K562 (cell line): ENCODE measurements at regions of chr18 and their contacts with region 1.

Region 1: DNA sequence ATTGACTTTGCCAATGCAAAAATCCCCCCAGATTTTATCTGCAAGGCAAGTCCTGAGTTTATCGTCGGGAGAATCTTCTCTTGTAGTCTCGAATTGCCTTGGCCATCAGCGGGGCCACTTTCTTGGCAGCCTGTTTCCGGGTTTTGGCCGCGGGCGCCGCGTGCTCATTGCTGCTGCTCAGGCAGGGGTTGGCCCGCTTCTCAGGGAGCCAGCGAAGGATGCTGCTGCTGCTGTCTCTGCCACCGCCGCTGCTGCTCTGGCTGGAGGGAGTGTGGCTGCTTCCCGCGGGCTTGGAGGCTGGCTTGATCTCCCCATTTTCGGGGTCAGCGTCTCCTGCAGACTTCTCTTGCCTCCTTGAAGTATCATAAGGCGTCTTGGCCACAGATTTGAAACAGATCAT is 2.5 kb downstream of the ELOA2 start:
- DNase-seq: no peak
- ATAC-seq: no peak
- H3K4me3 ChIP-seq: no peak overlapping the region
- H3K27ac ChIP-seq: no peak overlapping the region
- H3K4me1 ChIP-seq: peaks cover 0 to 7% of the 10 kb centered on the region in 2 experiments; a peak in 2 of 5 replicates
- H3K27me3 ChIP-seq: peaks cover 21 to 37% of the 10 kb centered on the region in 2 experiments
- CTCF ChIP-seq: no peak
- EP300 ChIP-seq: no peak
- POLR2A ChIP-seq: no peak
- RAD21 ChIP-seq: no peak

Region 2: DNA sequence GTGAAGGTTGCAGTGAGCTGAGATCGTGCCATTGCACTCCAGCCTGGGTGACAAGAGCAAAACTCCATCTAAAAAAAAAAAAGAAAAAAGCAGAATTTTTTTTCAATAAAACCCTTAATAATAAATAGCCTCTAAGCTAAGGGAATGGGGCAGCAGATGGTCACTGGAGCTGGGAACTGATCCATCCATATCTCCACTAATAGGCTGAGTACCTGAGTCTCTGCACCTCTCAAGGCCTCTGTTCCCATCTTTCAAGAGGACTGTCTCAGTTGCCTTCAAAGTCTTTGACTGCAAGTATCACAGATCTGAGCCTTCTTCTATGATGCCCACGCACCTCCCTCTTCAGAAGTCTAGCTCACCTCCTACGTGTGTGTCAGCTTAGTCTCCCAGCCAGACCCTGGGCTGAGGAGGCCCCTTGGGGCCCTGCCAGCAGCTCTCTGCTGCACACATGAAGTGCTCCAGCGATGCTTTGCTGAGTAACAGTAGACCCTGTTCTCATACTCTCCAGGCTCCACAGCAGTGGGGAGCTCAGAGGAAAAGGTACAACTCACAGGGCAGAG is 309.0 kb before region 1 on chr18:
- CTCF ChIA-PET with region 1: no interaction called
- POLR2A ChIA-PET with region 1: no interaction called
- in situ Hi-C with region 1: loop called (anchors 10 kb)
- intact Hi-C with region 1: no loop called
- DNase-seq: no peak
- ATAC-seq: no peak
- H3K4me3 ChIP-seq: no peak overlapping the region
- H3K27ac ChIP-seq: no peak overlapping the region
- H3K4me1 ChIP-seq: no peaks in the 10 kb centered on the region
- H3K27me3 ChIP-seq: peaks cover 0 to 22% of the 10 kb centered on the region in 2 experiments; a peak in 2 of 5 replicates
- CTCF ChIP-seq: no peak
- EP300 ChIP-seq: no peak
- POLR2A ChIP-seq: no peak
- RAD21 ChIP-seq: no peak

Region 3: DNA sequence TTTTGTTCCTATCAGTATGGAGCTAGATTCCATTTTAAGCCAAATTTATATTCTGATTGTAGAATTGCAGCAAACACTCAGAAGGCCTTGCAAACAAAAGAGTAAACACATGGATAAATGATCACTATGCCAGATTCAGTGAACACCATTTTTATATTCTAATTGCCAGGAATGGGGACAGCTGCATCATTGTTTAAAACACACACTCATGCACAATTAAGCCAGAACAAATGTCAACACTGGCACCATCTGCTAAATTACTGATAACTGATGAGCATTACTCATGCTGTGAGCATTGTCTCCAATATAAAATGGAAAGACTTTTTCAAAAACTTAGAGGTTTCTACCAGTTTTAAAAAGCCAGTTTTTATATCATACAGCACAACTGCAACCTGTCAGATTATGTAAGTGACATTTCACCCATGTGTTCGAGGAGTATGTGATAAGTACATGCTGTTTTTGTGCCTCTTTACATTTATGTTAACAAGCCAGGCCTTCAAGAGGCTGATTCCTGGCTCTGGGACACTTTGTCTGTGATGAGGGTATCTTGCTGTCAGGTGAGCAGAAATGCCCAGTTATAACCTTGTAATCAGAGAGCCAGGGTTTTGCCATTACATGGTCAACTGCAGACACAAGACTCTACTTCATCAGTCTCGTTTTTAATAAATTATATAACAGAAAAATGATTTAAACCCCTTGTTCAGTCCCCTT is 271.7 kb before region 1 on chr18:
- CTCF ChIA-PET with region 1: no interaction called
- POLR2A ChIA-PET with region 1: no interaction called
- in situ Hi-C with region 1: loop called (anchors 10 kb)
- intact Hi-C with region 1: no loop called
- DNase-seq: no peak
- ATAC-seq: no peak
- H3K4me3 ChIP-seq: no peak overlapping the region
- H3K27ac ChIP-seq: no peak overlapping the region
- H3K4me1 ChIP-seq: peaks cover 0 to under 1% of the 10 kb centered on the region in 2 experiments; a peak in 1 of 5 replicates
- H3K27me3 ChIP-seq: peaks cover 0 to 7% of the 10 kb centered on the region in 2 experiments; a peak in 3 of 5 replicates
- CTCF ChIP-seq: no peak
- EP300 ChIP-seq: no peak
- POLR2A ChIP-seq: no peak
- RAD21 ChIP-seq: no peak

Region 4: GRCh38 chr18:46950064-46950656 is 82.8 kb before region 1 on chr18:
- CTCF ChIA-PET with region 1: no interaction called
- POLR2A ChIA-PET with region 1: no interaction called
- in situ Hi-C with region 1: loop called (anchors 5 kb)
- intact Hi-C with region 1: no loop called
- DNase-seq: peak in 3 of 4 experiments; percentile 16 to 21 (median 17)
- ATAC-seq: peak; percentile 42; the same call in 1 of the 3 replicates
- H3K4me3 ChIP-seq: no peak overlapping the region
- H3K27ac ChIP-seq: no peak overlapping the region
- H3K4me1 ChIP-seq: no peaks in the 10 kb centered on the region; a peak in 1 of 5 replicates
- H3K27me3 ChIP-seq: peaks cover 2 to 10% of the 10 kb centered on the region in 2 experiments; a peak in 1 of 5 replicates
- CTCF ChIP-seq: peak in 2 of 3 experiments; percentile 48 to 51; a peak in 4 of 6 replicates
- EP300 ChIP-seq: no peak
- POLR2A ChIP-seq: no peak
- RAD21 ChIP-seq: no peak

Region 5: GRCh38 chr18:47075098-47075883 is 42.3 kb after region 1 on chr18:
- CTCF ChIA-PET with region 1: no interaction called
- POLR2A ChIA-PET with region 1: no interaction called
- in situ Hi-C with region 1: no loop called
- intact Hi-C with region 1: no loop called
- DNase-seq: peak in 1 of 4 experiments; percentile 5
- ATAC-seq: no peak
- H3K4me3 ChIP-seq: no peak overlapping the region
- H3K27ac ChIP-seq: no peak overlapping the region
- H3K4me1 ChIP-seq: no peaks in the 10 kb centered on the region
- H3K27me3 ChIP-seq: peaks cover 0 to 7% of the 10 kb centered on the region in 2 experiments; a peak in 2 of 5 replicates
- CTCF ChIP-seq: no peak
- EP300 ChIP-seq: no peak
- POLR2A ChIP-seq: no peak
- RAD21 ChIP-seq: no peak